BJ (cell line): ENCODE measurements at regions of chr1 and their contacts with region 1.

Region 1: DNA sequence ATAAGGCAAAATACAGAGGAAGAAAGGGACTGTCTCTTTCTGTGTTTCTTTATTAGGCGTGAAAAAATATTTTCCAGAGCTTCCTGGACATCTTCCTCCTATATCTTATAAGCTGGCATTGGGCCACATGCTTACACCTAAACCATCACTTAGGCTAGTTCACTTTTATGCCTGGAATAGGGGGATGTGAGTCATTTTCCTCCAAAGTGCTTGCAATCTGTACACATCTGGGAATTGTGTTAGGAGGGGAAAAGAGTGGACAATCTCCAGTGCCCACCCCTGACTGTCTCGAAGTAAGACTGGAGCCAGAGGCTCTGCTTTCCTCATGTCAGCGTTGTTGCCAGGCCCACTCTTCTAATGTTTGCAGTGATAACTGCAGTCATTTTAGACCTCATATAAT is 29.9 kb downstream of the GIPC2 start:
- DNase-seq: no peak
- H3K4me3 ChIP-seq: no peak overlapping the region
- H3K27me3 ChIP-seq: no peaks in the 10 kb centered on the region
- CTCF ChIP-seq: no peak

Region 2: GRCh38 chr1:77499466-77499865 is 576.2 kb before region 1 on chr1:
- CTCF ChIA-PET with region 1: no interaction called
- POLR2A ChIA-PET with region 1: interaction called, 11 read pairs
- DNase-seq: no peak
- H3K4me3 ChIP-seq: no peak overlapping the region
- H3K27me3 ChIP-seq: no peaks in the 10 kb centered on the region
- CTCF ChIP-seq: no peak